ENCODE measurements at regions of chr20 and their contacts with region 1.

Region 1: DNA sequence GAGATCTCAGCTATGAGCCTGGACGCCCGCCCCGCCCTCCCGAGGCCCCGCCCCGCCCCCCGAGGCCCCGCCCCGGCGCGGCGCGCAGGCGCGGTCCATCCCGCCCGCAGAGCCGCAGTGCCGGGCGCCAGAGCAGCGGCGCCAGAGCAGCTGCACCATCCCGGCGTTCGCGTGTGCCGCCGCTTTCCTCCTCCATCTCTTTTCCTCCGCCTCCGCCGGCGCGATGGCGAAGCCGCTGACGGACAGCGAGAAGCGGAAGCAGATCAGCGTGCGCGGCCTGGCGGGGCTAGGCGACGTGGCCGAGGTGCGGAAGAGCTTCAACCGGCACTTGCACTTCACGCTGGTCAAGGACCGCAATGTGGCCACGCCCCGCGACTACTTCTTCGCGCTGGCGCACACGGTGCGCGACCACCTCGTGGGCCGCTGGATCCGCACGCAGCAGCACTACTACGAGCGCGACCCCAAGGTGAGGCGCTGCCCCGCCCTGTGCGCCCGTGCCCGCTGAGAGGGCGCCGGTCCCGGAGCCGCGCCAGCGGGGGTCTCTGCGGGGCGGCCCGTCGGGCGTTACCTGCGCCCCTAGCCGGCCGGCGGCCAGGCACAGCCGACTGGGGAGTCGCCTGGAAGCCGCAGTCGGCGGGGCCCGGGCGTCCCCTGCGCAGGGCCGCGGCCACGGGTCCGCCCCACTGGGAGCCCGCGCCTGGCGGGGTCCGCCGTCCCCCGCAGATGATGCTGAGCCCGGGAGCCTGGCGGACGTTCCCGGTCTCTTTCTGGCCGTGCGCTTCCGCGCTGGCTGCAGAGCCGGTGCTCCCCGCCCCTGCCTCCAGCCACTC is at the start of gene PYGB:
- DNase-seq: peak; percentile 66 to 81 (median 71)
- H3K4me3 ChIP-seq: peak within 1 kb of the TSS; percentile 81
- H3K4me3 Mint-ChIP-seq: peak within 1 kb of the TSS; percentile 93 to 97 (median 95)
- H3K27ac ChIP-seq: peak within 1 kb of the TSS; percentile 51
- H3K27ac Mint-ChIP-seq: peak within 1 kb of the TSS; percentile 70 to 93 (median 89)
- H3K4me1 ChIP-seq: peaks cover 25% of the 10 kb centered on the region
- H3K4me1 Mint-ChIP-seq: peaks cover 41 to 55% (median 54%) of the 10 kb centered on the region in 3 donors
- H3K27me3 ChIP-seq: no peaks in the 10 kb centered on the region
- H3K27me3 Mint-ChIP-seq: peaks cover 0 to 7% of the 10 kb centered on the region in 2 donors
- total RNA-seq, gene PYGB: 32.5 to 35.7 TPM

Region 2: GRCh38 chr20:25195014-25195961 is 52.9 kb before region 1 on chr20 and contains the start of gene ENTPD6:
- CTCF ChIA-PET with region 1: no interaction called
- POLR2A ChIA-PET with region 1: interaction called, 14 read pairs
- DNase-seq: peak; percentile 92 to 97 (median 94)
- H3K4me3 ChIP-seq: peak within 1 kb of the TSS; percentile 75
- H3K4me3 Mint-ChIP-seq: peak within 1 kb of the TSS; percentile 82 to 92 (median 88)
- H3K27ac ChIP-seq: peak within 1 kb of the TSS; percentile 73
- H3K27ac Mint-ChIP-seq: peak within 1 kb of the TSS; percentile 88 to 97 (median 94)
- H3K4me1 ChIP-seq: peaks cover 24% of the 10 kb centered on the region
- H3K4me1 Mint-ChIP-seq: peaks cover 39 to 41% (median 39%) of the 10 kb centered on the region in 3 donors
- H3K27me3 ChIP-seq: peaks cover 5% of the 10 kb centered on the region
- H3K27me3 Mint-ChIP-seq: peaks cover 0 to 1% of the 10 kb centered on the region in 2 donors
- total RNA-seq, gene ENTPD6: 44.2 to 47.0 TPM

Region 3: GRCh38 chr20:25227317-25227831 is 20.8 kb before region 1 on chr20:
- CTCF ChIA-PET with region 1: no interaction called
- POLR2A ChIA-PET with region 1: no interaction called
- DNase-seq: no peak
- H3K4me3 ChIP-seq: no peak overlapping the region
- H3K4me3 Mint-ChIP-seq: no peak overlapping the region
- H3K27ac ChIP-seq: no peak overlapping the region
- H3K27ac Mint-ChIP-seq: peak overlapping the region in 1 of 8 donors; percentile 80
- H3K4me1 ChIP-seq: no peaks in the 10 kb centered on the region
- H3K4me1 Mint-ChIP-seq: peaks cover 0 to 3% (median 0%) of the 10 kb centered on the region in 3 donors
- H3K27me3 ChIP-seq: no peaks in the 10 kb centered on the region
- H3K27me3 Mint-ChIP-seq: no peaks in the 10 kb centered on the region

Region 4: DNA sequence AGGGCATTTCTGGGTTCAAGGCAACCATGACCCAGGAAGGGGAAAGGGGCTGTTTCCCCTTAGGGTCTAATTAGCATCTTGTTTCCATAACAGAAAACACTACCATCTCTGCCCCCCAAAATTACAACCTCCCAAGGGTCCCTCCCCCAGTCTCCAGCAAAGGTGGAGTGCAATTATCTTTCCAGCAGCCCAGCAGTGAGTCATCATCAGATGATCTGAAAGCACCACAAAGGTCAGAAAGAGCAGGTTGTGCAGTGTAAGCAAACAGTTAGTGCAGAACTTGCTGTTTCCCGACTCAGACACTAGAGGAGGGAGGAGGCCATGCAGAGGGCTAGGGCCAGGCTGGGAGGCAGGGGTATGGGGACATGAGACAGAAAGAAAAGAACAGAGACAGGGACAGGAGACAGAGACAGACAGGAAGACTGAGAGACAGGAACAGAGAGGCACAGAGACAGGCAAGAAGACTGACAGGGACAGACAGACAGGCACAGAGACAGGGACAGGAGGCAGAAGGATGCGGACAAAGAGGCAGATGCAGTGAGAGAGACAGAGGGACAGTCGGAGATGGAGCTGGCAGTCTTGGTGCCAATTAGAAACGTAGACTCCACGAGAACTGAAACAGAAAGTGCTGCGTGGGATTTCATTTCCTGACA is 62.2 kb after region 1 on chr20:
- CTCF ChIA-PET with region 1: no interaction called
- POLR2A ChIA-PET with region 1: no interaction called
- DNase-seq: peak in 1 of 5 donors; percentile 56
- H3K4me3 ChIP-seq: peak overlapping the region; percentile 52
- H3K4me3 Mint-ChIP-seq: peak overlapping the region; percentile 4 to 82 (median 68)
- H3K27ac ChIP-seq: peak overlapping the region; percentile 64
- H3K27ac Mint-ChIP-seq: peak overlapping the region; percentile 5 to 94 (median 76)
- H3K4me1 ChIP-seq: peaks cover 17% of the 10 kb centered on the region
- H3K4me1 Mint-ChIP-seq: peaks cover 13 to 39% (median 16%) of the 10 kb centered on the region in 3 donors
- H3K27me3 ChIP-seq: no peaks in the 10 kb centered on the region
- H3K27me3 Mint-ChIP-seq: peaks cover 0 to 2% of the 10 kb centered on the region in 2 donors

Measured in CD8-positive, alpha-beta memory T cell (primary cell).